Heart right ventricle (tissue), 16 donors: ENCODE measurements at regions of chr2 and their contacts with region 1.

Region 1: GRCh38 chr2:159807183-159808031 is 9.4 kb upstream of the CD302 start:
- DNase-seq: peak in 1 of 2 donors; percentile 34
- ATAC-seq: peak in 3 of 8 donors; percentile 48 to 70 (median 58)
- H3K4me3 ChIP-seq: no peak overlapping the region
- H3K27ac ChIP-seq: no peak overlapping the region
- H3K4me1 ChIP-seq: peaks cover 0 to 5% (median 0%) of the 10 kb centered on the region in 9 donors
- H3K27me3 ChIP-seq: no peaks in the 10 kb centered on the region
- CTCF ChIP-seq: peak; percentile 49 to 82 (median 76)

Region 2: GRCh38 chr2:159615140-159615951 is 192.1 kb before region 1 on chr2:
- intact Hi-C with region 1: loop called in 1 of 10 experiments (anchors 10 kb)
- DNase-seq: peak; percentile 89 to 95
- ATAC-seq: peak; percentile 93 to 98 (median 96)
- H3K4me3 ChIP-seq: peak overlapping the region; percentile 57 to 81 (median 74)
- H3K27ac ChIP-seq: peak overlapping the region; percentile 94 to 100 (median 98)
- H3K4me1 ChIP-seq: peaks cover 0 to 65% (median 47%) of the 10 kb centered on the region in 9 donors
- H3K27me3 ChIP-seq: no peaks in the 10 kb centered on the region
- CTCF ChIP-seq: no peak

Region 3: GRCh38 chr2:159671047-159671446 is 136.4 kb before region 1 on chr2:
- intact Hi-C with region 1: no loop called
- DNase-seq: no peak
- ATAC-seq: no peak
- H3K4me3 ChIP-seq: no peak overlapping the region
- H3K27ac ChIP-seq: no peak overlapping the region
- H3K4me1 ChIP-seq: no peaks in the 10 kb centered on the region
- H3K27me3 ChIP-seq: no peaks in the 10 kb centered on the region
- CTCF ChIP-seq: no peak

Region 4: GRCh38 chr2:159939946-159940345 is 132.5 kb after region 1 on chr2:
- intact Hi-C with region 1: loop called in 1 of 10 experiments (anchors 10 kb)
- DNase-seq: no peak
- ATAC-seq: peak in 1 of 8 donors; percentile 39
- H3K4me3 ChIP-seq: no peak overlapping the region
- H3K27ac ChIP-seq: no peak overlapping the region
- H3K4me1 ChIP-seq: peaks cover 0 to 27% (median 11%) of the 10 kb centered on the region in 9 donors
- H3K27me3 ChIP-seq: no peaks in the 10 kb centered on the region
- CTCF ChIP-seq: peak in 7 of 9 donors; percentile 9 to 55 (median 33)

Region 5: GRCh38 chr2:159968279-159968900 is 161.0 kb after region 1 on chr2:
- intact Hi-C with region 1: loop called in 2 of 10 experiments (anchors 10 kb)
- DNase-seq: peak in 1 of 2 donors; percentile 32
- ATAC-seq: peak in 6 of 8 donors; percentile 55 to 79 (median 72)
- H3K4me3 ChIP-seq: no peak overlapping the region
- H3K27ac ChIP-seq: no peak overlapping the region
- H3K4me1 ChIP-seq: peaks cover 0 to 4% (median 0%) of the 10 kb centered on the region in 9 donors
- H3K27me3 ChIP-seq: no peaks in the 10 kb centered on the region
- CTCF ChIP-seq: peak; percentile 40 to 75 (median 63)